Aorta (tissue), 5 donors: ENCODE measurements at regions of chr3 and their contacts with region 1.

Region 1: GRCh38 chr3:15892311-15893227 is 94.8 kb upstream of the ANKRD28 start:
- DNase-seq: no peak
- ATAC-seq: peak; percentile 44
- H3K4me3 ChIP-seq: no peak overlapping the region
- H3K27ac ChIP-seq: no peak overlapping the region
- H3K4me1 ChIP-seq: peaks cover 2 to 5% of the 10 kb centered on the region in 2 donors
- H3K27me3 ChIP-seq: no peaks in the 10 kb centered on the region

Region 2: DNA sequence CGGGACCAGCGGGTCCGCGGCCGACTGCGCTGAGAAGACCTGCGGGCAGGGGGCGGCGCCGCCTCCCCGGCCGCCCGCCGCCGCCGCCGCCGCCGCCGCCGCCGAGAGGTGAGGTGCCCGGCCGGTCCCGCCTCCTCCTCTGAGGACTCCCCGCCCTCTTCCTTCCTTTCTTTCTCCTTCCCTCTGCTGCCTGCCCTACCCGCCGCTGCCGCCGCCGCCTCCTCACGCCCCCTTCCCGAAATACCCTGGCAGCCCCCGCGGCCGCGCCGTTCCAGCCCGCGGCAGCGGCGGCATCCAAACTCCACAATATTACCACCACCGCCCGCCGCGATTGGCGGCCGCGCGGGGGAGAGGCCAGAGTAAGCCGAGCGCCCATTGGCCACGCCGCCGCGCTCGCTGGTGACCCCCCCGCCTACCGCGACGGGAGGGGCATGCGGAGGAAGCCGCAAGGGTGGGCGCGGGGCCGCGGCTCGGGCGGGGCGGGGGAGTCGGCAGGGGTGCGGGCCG is 33.0 kb before region 1 on chr3:
- intact Hi-C with region 1: loop called in 1 of 2 experiments (anchors 5 kb)
- DNase-seq: peak; percentile 84 to 94
- ATAC-seq: peak; percentile 95
- H3K4me3 ChIP-seq: peak overlapping the region; percentile 79 to 82
- H3K27ac ChIP-seq: no peak overlapping the region
- H3K4me1 ChIP-seq: no peaks in the 10 kb centered on the region
- H3K27me3 ChIP-seq: no peaks in the 10 kb centered on the region